WTC11 (cell line): ENCODE measurements at regions of chr4 and their contacts with region 1.

Region 1: GRCh38 chr4:2412885-2413716 is 5.3 kb downstream of the ZFYVE28 start:
- DNase-seq: peak; percentile 80
- ATAC-seq: peak; percentile 73
- H3K4me3 Mint-ChIP-seq: peak overlapping the region; percentile 62
- H3K27ac Mint-ChIP-seq: peak overlapping the region; percentile 91
- H3K4me1 Mint-ChIP-seq: peaks cover 55% of the 10 kb centered on the region
- H3K27me3 Mint-ChIP-seq: peaks cover 44% of the 10 kb centered on the region
- CTCF ChIP-seq: no peak

Region 2: DNA sequence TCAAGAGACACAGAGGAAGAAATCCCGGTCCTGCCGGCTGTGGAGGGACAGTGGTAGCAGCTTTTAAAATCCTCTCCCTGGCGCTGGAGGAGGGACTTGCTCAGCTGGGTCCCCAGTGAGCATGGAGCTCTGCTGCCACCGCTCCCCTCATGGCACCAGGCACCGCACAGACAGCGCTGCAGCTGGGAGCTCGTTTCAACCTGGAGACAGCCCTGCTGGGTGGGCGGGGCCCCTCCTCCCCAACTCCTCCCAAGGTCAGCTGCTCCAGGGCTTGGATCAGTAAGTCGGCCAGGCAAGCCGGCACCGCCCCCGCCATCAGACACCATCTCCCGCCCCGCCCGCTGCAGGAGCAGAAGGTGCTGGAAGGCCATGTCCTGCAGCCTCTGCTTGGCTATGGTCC is 11.1 kb before region 1 on chr4:
- CTCF ChIA-PET with region 1: interaction called, 24 read pairs
- POLR2A ChIA-PET with region 1: interaction called, 6 read pairs
- DNase-seq: peak; percentile 88
- ATAC-seq: peak; percentile 92
- H3K4me3 Mint-ChIP-seq: peak overlapping the region; percentile 67
- H3K27ac Mint-ChIP-seq: 0 out of 2 replicates have a peak overlapping the region, but pooled peaks have one; percentile 23
- H3K4me1 Mint-ChIP-seq: peaks cover 30% of the 10 kb centered on the region
- H3K27me3 Mint-ChIP-seq: peaks cover 9% of the 10 kb centered on the region
- CTCF ChIP-seq: no peak